ENCODE measurements at regions of chr2 and their contacts with region 1.

Region 1: GRCh38 chr2:101697124-101698013 is at the start of gene MAP4K4:
- DNase-seq: peak; percentile 53 to 88 (median 78)
- ATAC-seq: peak; percentile 63
- H3K4me3 ChIP-seq: peak within 1 kb of the TSS; percentile 71 to 81
- H3K4me3 Mint-ChIP-seq: peak within 1 kb of the TSS; percentile 94
- H3K27ac ChIP-seq: peak within 1 kb of the TSS; percentile 56 to 65
- H3K27ac Mint-ChIP-seq: peak within 1 kb of the TSS; percentile 96
- H3K4me1 ChIP-seq: peaks cover 34% of the 10 kb centered on the region
- H3K4me1 Mint-ChIP-seq: peaks cover 28% of the 10 kb centered on the region
- H3K27me3 ChIP-seq: no peaks in the 10 kb centered on the region
- H3K27me3 Mint-ChIP-seq: no peaks in the 10 kb centered on the region
- CTCF ChIP-seq: no peak
- total RNA-seq, gene MAP4K4: 72.4 TPM

Region 2: GRCh38 chr2:101001691-101002561 is 695.4 kb before region 1 on chr2 and contains the start of gene RPL31:
- CTCF ChIA-PET with region 1: no interaction called
- POLR2A ChIA-PET with region 1: no interaction called
- intact Hi-C with region 1: loop called in 1 of 2 experiments (anchors 10 kb)
- DNase-seq: peak; percentile 90 to 98 (median 95)
- ATAC-seq: peak; percentile 97
- H3K4me3 ChIP-seq: peak within 1 kb of the TSS; percentile 92 to 95
- H3K4me3 Mint-ChIP-seq: peak within 1 kb of the TSS; percentile 95
- H3K27ac ChIP-seq: peak within 1 kb of the TSS; percentile 81 to 90
- H3K27ac Mint-ChIP-seq: peak within 1 kb of the TSS; percentile 98
- H3K4me1 ChIP-seq: peaks cover 27% of the 10 kb centered on the region
- H3K4me1 Mint-ChIP-seq: peaks cover 51% of the 10 kb centered on the region
- H3K27me3 ChIP-seq: no peaks in the 10 kb centered on the region
- H3K27me3 Mint-ChIP-seq: no peaks in the 10 kb centered on the region
- CTCF ChIP-seq: no peak
- total RNA-seq, gene RPL31: 2,776 to 2,895 TPM

Region 3: DNA sequence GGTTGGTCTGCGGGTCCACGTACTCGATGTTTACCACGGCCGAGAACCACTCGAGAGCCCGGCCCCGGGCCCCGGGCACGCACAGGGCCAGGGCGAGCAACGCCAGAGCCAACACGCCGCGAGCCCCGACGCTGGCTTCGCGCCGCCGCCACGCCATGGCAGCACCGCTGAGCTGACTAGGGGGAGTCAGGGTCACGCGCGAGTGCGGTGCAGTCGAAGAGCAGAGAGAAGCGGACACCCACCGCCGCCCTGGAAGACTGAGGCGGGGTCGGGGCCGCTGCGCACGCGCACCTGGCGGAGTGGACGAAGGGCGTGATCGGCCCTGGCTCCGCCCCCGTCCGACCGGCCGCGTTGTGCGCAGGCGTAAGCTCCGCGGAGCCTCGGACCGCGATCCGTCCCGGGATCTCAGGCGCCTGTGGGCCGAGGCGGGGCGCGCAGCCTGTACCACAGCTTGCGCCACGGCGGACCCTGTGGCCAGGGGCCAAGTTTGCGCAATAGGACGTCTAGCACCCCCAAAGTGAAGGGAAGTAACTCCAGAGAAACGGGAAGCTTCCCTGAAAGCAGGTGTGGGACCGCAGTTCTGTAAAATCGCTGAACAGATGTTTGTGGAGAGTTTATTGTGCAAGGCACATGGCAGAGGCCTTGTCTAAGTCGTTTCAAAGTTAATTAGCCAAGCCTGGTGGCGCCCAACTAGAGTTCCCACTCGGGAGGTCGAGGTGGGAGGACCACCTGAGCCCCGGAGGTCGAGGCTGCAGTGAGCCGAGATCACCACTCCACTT is 388.7 kb before region 1 on chr2 and contains the start of gene RNF149:
- CTCF ChIA-PET with region 1: no interaction called
- POLR2A ChIA-PET with region 1: no interaction called
- intact Hi-C with region 1: loop called (anchors 5 to 10 kb)
- DNase-seq: peak; percentile 80 to 97 (median 93)
- ATAC-seq: peak; percentile 64
- H3K4me3 ChIP-seq: peak within 1 kb of the TSS; percentile 75 to 88
- H3K4me3 Mint-ChIP-seq: peak within 1 kb of the TSS; percentile 92
- H3K27ac ChIP-seq: peak within 1 kb of the TSS; percentile 81 to 90
- H3K27ac Mint-ChIP-seq: peak within 1 kb of the TSS; percentile 99
- H3K4me1 ChIP-seq: peaks cover 72% of the 10 kb centered on the region
- H3K4me1 Mint-ChIP-seq: peaks cover 78% of the 10 kb centered on the region
- H3K27me3 ChIP-seq: no peaks in the 10 kb centered on the region
- H3K27me3 Mint-ChIP-seq: no peaks in the 10 kb centered on the region
- CTCF ChIP-seq: no peak
- total RNA-seq, gene RNF149: 128 to 129 TPM

Region 4: GRCh38 chr2:101717071-101717845 is 19.9 kb after region 1 on chr2:
- CTCF ChIA-PET with region 1: interaction called, 25 read pairs
- POLR2A ChIA-PET with region 1: interaction called, 45 read pairs
- intact Hi-C with region 1: loop called in 1 of 2 experiments (anchors 2 kb)
- DNase-seq: peak in 7 of 9 experiments; percentile 36 to 77 (median 64)
- ATAC-seq: peak; percentile 64
- H3K4me3 ChIP-seq: peak overlapping the region in 1 of 2 experiments; percentile 8
- H3K4me3 Mint-ChIP-seq: peak overlapping the region; percentile 38
- H3K27ac ChIP-seq: peak overlapping the region; percentile 17 to 71
- H3K27ac Mint-ChIP-seq: peak overlapping the region; percentile 95
- H3K4me1 ChIP-seq: peaks cover 95% of the 10 kb centered on the region
- H3K4me1 Mint-ChIP-seq: peaks cover 82% of the 10 kb centered on the region
- H3K27me3 ChIP-seq: no peaks in the 10 kb centered on the region
- H3K27me3 Mint-ChIP-seq: no peaks in the 10 kb centered on the region
- CTCF ChIP-seq: no peak

Region 5: DNA sequence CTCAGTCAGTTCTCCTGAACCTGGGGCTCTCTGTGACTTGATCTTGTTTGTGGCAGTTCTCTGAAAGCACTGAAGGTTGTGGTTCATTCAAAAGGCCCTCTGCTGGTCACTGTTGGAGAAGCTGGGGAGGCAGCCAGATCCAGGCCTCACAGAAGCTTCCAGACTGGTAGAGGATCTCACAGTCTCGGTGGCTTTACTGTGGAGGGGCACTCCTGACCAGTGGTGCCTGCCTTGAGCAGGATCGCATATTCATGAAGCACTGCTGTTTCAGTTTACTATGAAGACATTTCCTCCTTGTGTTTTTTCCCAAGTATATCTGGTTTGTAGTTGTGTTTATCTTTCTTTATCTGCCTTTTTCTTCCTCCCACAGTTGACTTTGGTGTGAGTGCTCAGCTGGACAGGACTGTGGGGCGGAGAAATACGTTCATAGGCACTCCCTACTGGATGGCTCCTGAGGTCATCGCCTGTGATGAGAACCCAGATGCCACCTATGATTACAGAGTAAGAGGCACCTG is 134.0 kb after region 1 on chr2:
- CTCF ChIA-PET with region 1: interaction called, 6 read pairs
- POLR2A ChIA-PET with region 1: interaction called, 3 read pairs
- intact Hi-C with region 1: loop called (anchors 1 to 5 kb)
- DNase-seq: peak; percentile 30 to 75 (median 62)
- ATAC-seq: peak; percentile 67
- H3K4me3 ChIP-seq: no peak overlapping the region
- H3K4me3 Mint-ChIP-seq: no peak overlapping the region
- H3K27ac ChIP-seq: no peak overlapping the region
- H3K27ac Mint-ChIP-seq: peak overlapping the region; percentile 5
- H3K4me1 ChIP-seq: peaks cover 47% of the 10 kb centered on the region
- H3K4me1 Mint-ChIP-seq: peaks cover 52% of the 10 kb centered on the region
- H3K27me3 ChIP-seq: no peaks in the 10 kb centered on the region
- H3K27me3 Mint-ChIP-seq: no peaks in the 10 kb centered on the region
- CTCF ChIP-seq: peak; percentile 42

Measured in CD8-positive, alpha-beta T cell (primary cell).